Left lung (tissue), 14 donors: ENCODE measurements at regions of chr1 and their contacts with region 1.

Region 1: DNA sequence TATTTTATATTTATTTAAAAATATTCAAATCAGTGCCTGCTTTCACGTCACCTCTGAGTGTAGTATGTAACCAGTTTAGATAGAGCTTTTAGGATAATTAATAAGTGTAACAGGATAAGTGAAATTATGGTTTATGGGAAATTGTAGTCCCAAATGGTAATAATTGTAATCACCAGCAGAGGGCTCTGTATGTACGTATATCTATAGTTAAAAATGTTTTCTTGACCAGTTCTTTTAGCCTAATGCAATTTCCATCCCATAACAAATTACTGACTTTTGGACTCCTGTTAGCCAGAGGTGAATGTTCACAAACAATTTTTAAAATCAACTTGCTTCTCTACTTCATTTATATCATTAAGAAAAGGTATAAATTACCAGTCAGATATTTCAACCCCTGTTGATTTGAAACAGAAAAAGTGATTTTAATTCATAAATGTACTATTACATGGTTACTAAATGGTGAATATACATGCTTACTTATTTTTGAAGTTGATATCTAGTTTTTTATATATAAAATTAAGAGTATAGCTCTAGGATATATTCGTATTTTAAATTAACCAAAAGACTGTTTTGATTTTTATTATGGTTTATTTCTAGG is 25.3 kb downstream of the SLC30A7 start:
- DNase-seq: peak in 2 of 4 donors; percentile 58 to 65
- ATAC-seq: peak; percentile 72
- H3K4me3 ChIP-seq: no peak overlapping the region
- H3K27ac ChIP-seq: no peak overlapping the region
- H3K4me1 ChIP-seq: peaks cover 0 to 8% of the 10 kb centered on the region in 2 donors
- H3K27me3 ChIP-seq: no peaks in the 10 kb centered on the region
- CTCF ChIP-seq: peak; percentile 53 to 69

Region 2: GRCh38 chr1:100750005-100750885 is 171.0 kb before region 1 on chr1:
- intact Hi-C with region 1: no loop called
- DNase-seq: no peak
- ATAC-seq: no peak
- H3K4me3 ChIP-seq: no peak overlapping the region
- H3K27ac ChIP-seq: no peak overlapping the region
- H3K4me1 ChIP-seq: no peaks in the 10 kb centered on the region
- H3K27me3 ChIP-seq: no peaks in the 10 kb centered on the region
- CTCF ChIP-seq: no peak

Region 3: DNA sequence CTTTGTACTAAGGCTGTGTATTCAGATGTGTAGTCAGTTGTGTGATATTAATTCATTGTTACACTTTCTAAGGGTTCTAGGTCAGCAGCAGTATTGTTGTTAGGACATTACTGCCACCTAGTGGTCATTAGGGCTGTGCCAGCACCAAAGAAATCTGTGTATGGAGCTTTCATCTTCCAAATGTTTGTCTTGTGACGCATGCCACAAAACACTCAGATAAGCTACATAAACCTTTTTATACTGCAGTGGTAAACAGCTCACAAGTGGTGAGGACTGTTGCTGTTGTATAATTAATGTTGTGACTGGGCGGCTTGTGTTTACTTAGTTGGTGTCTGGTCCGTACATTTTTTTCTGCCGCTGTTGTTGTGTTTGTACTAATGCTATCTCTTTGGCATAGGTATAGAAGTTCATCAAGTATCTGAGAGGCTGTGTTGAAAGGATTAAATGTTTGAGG is 367.3 kb after region 1 on chr1:
- intact Hi-C with region 1: loop called in 1 of 2 experiments (anchors 5 kb)
- DNase-seq: peak in 3 of 4 donors; percentile 49 to 89 (median 82)
- ATAC-seq: peak; percentile 90
- H3K4me3 ChIP-seq: no peak overlapping the region
- H3K27ac ChIP-seq: peak overlapping the region in 1 of 2 donors; percentile 35
- H3K4me1 ChIP-seq: peaks cover 0 to 33% of the 10 kb centered on the region in 2 donors
- H3K27me3 ChIP-seq: no peaks in the 10 kb centered on the region
- CTCF ChIP-seq: peak; percentile 93